ENCODE measurements at regions of chr16 and their contacts with region 1.

Region 1: GRCh38 chr16:77171745-77172635 is 19.0 kb upstream of the MON1B start:
- DNase-seq: peak; percentile 33
- ATAC-seq: peak; percentile 72
- H3K4me3 Mint-ChIP-seq: no peak overlapping the region
- H3K27ac Mint-ChIP-seq: no peak overlapping the region
- H3K4me1 Mint-ChIP-seq: no peaks in the 10 kb centered on the region
- H3K27me3 Mint-ChIP-seq: peaks cover 30% of the 10 kb centered on the region
- CTCF ChIP-seq: peak; percentile 75

Region 2: GRCh38 chr16:75789237-75789636 is 1382.8 kb before region 1 on chr16:
- CTCF ChIA-PET with region 1: interaction called, 9 read pairs
- POLR2A ChIA-PET with region 1: no interaction called
- intact Hi-C with region 1: loop called (anchors 2 kb)
- DNase-seq: no peak
- ATAC-seq: peak; percentile 51
- H3K4me3 Mint-ChIP-seq: no peak overlapping the region
- H3K27ac Mint-ChIP-seq: no peak overlapping the region
- H3K4me1 Mint-ChIP-seq: no peaks in the 10 kb centered on the region
- H3K27me3 Mint-ChIP-seq: peaks cover 8% of the 10 kb centered on the region
- CTCF ChIP-seq: peak; percentile 83

Region 3: DNA sequence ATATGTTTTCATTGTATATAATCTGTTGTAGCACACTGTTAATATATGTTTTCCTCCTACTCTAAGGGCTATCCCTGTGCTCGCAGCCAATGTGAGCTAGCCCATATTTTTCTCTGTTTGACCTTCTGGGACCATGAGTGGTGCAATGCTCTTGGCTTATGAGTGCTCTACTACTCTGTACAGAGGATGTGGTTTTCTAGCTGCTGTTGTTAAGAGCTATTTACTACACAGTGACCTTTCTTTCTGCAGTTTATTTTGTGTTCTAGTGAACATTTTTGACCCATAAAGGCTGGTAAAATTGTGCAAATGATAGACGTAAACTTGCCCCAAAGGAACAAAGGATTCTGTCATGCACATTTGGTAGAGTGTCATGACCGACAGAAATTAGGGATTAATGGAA is 1361.6 kb before region 1 on chr16:
- CTCF ChIA-PET with region 1: interaction called, 10 read pairs
- POLR2A ChIA-PET with region 1: no interaction called
- intact Hi-C with region 1: no loop called
- DNase-seq: no peak
- ATAC-seq: no peak
- H3K4me3 Mint-ChIP-seq: no peak overlapping the region
- H3K27ac Mint-ChIP-seq: no peak overlapping the region
- H3K4me1 Mint-ChIP-seq: no peaks in the 10 kb centered on the region
- H3K27me3 Mint-ChIP-seq: peaks cover 9% of the 10 kb centered on the region
- CTCF ChIP-seq: no peak

Region 4: DNA sequence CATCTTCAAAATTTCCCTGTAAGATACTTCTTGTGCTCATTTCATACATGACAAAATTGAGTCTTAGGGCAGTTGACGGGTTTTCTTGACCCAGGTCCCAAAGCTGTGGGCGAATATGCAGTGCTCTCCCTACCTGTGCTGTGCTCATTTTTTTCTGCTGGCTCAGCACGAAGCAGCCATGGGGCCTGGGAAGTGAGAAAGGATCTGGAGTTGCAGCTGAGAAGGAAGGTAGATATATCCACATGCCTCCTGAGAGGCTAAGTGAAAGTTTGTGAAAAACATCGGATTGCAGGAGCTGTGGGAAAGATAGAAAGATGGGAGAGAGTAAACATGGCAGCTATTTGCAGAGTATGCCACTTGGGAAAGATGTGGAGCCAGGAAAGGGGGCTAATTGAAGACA is 23.9 kb before region 1 on chr16:
- CTCF ChIA-PET with region 1: interaction called, 11 read pairs
- POLR2A ChIA-PET with region 1: no interaction called
- intact Hi-C with region 1: no loop called
- DNase-seq: no peak
- ATAC-seq: no peak
- H3K4me3 Mint-ChIP-seq: no peak overlapping the region
- H3K27ac Mint-ChIP-seq: no peak overlapping the region
- H3K4me1 Mint-ChIP-seq: no peaks in the 10 kb centered on the region
- H3K27me3 Mint-ChIP-seq: peaks cover 14% of the 10 kb centered on the region
- CTCF ChIP-seq: no peak

Region 5: DNA sequence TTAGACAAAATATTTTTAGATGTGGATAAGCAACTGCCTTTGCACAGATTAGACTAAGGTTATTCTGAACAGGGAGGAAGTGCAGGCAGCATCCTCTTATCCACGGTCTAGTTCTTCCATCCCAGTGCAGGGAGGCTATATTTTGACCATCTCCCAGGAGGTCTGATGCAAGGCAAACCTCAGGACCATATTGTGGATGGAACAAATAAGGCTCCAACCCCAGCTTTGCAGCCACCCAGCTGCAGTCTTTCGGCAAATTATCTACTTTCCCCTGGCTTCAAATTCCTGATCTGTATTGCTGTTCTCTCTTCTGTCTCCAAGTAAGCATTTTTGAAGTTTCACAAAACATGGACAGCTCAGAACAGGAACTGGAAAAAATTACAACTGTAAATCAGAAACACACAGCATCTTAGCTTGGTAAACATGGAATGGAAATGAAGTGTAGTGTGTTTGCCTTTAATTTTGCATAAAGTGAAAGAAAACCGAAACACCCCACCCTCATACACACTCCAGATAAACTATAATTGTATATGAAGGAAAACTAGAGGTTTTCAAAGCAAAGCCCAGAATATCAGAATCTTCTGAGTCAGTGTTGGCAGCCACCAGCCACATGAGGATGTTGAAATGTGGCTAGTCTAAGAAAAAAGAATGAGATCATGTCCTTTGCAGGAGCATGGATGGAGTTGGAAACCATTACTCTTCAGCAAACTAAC is 14.5 kb before region 1 on chr16:
- CTCF ChIA-PET with region 1: interaction called, 31 read pairs
- POLR2A ChIA-PET with region 1: no interaction called
- intact Hi-C with region 1: no loop called
- DNase-seq: no peak
- ATAC-seq: no peak
- H3K4me3 Mint-ChIP-seq: no peak overlapping the region
- H3K27ac Mint-ChIP-seq: no peak overlapping the region
- H3K4me1 Mint-ChIP-seq: no peaks in the 10 kb centered on the region
- H3K27me3 Mint-ChIP-seq: peaks cover 19% of the 10 kb centered on the region
- CTCF ChIP-seq: no peak

Region 6: DNA sequence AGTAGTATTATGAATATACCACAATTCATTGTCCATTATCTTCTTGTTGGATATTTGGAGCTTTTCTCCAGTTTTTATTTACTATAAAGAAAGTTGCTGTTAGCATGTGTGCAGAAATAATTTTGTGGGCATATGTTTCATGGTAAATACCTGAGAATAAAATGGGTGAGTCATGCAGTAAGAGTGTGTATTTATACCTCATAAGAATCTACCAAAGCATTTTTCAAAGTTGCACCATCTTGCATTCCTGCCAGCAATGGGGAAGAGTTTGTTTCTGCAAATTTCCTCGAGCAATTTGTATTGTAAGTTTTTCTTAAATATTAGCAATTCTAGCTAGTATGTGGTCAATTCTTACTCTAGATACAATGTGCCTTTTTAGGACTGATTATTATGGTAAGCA is 11.1 kb after region 1 on chr16:
- CTCF ChIA-PET with region 1: interaction called, 10 read pairs
- POLR2A ChIA-PET with region 1: no interaction called
- intact Hi-C with region 1: no loop called
- DNase-seq: no peak
- ATAC-seq: no peak
- H3K4me3 Mint-ChIP-seq: no peak overlapping the region
- H3K27ac Mint-ChIP-seq: no peak overlapping the region
- H3K4me1 Mint-ChIP-seq: no peaks in the 10 kb centered on the region
- H3K27me3 Mint-ChIP-seq: peaks cover 11% of the 10 kb centered on the region
- CTCF ChIP-seq: no peak

Region 7: DNA sequence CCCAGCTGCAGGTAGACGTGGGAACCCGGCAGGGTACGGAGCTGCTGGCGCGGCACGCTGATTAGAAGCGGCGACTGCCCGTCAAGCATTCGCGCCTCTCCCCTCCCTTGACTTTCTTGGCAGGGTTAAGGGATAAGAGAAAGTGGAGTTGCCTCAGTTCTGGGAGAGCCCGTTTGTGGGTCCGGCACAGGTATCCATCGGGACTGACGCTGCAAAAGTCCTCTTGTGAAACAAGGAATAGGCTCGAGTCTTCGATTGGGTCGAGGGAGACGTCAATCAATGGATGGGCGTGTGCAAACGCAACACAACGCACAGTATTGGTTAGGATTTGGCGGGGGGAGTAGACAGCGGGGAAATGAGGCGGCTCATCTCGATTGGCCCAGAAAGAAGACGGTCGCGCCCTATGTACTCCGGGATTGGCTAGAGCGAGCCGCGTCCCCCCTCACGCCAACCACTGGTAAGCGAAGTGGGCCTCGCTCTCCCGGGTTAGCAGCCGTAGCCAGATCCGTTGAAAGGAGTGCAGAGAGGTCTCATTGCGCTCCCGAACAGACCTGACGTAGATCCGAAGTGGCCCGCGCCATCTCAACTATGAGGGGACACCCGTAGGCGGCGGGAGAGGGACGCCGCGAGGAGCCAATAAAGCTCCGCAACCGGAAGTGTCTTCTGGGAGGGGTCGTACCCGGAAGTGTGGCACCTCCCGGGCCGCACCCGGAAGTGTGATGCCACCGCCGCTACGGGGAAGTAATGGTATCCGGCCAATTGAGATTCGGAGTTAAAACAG is 18.7 kb after region 1 on chr16 and contains the start of gene MON1B:
- CTCF ChIA-PET with region 1: interaction called, 10 read pairs
- POLR2A ChIA-PET with region 1: no interaction called
- intact Hi-C with region 1: no loop called
- DNase-seq: peak; percentile 97
- ATAC-seq: peak; percentile 98
- H3K4me3 Mint-ChIP-seq: peak within 1 kb of the TSS; percentile 84
- H3K27ac Mint-ChIP-seq: peak within 1 kb of the TSS; percentile 89
- H3K4me1 Mint-ChIP-seq: peaks cover 38% of the 10 kb centered on the region
- H3K27me3 Mint-ChIP-seq: peaks cover 3% of the 10 kb centered on the region
- CTCF ChIP-seq: no peak
- total RNA-seq, gene MON1B: 54.3 to 60.5 TPM

Region 8: GRCh38 chr16:77406677-77407076 is 234.7 kb after region 1 on chr16:
- CTCF ChIA-PET with region 1: no interaction called
- POLR2A ChIA-PET with region 1: no interaction called
- intact Hi-C with region 1: no loop called
- DNase-seq: no peak
- ATAC-seq: no peak
- H3K4me3 Mint-ChIP-seq: no peak overlapping the region
- H3K27ac Mint-ChIP-seq: no peak overlapping the region
- H3K4me1 Mint-ChIP-seq: no peaks in the 10 kb centered on the region
- H3K27me3 Mint-ChIP-seq: peaks cover 5% of the 10 kb centered on the region
- CTCF ChIP-seq: no peak